ENCODE measurements at regions of chr17 and their contacts with region 1.

Region 1: GRCh38 chr17:58417300-58418092 is at the start of gene RNF43:
- DNase-seq: peak; percentile 93
- H3K4me3 Mint-ChIP-seq: no peak within 1 kb of the TSS
- H3K27ac Mint-ChIP-seq: no peak within 1 kb of the TSS
- H3K4me1 Mint-ChIP-seq: peaks cover 19% of the 10 kb centered on the region
- H3K27me3 Mint-ChIP-seq: peaks cover 7% of the 10 kb centered on the region

Region 2: GRCh38 chr17:58249270-58250133 is 168.0 kb before region 1 on chr17:
- CTCF ChIA-PET with region 1: interaction called, 16 read pairs
- DNase-seq: peak; percentile 79
- H3K4me3 Mint-ChIP-seq: peak overlapping the region; percentile 64
- H3K27ac Mint-ChIP-seq: no peak overlapping the region
- H3K4me1 Mint-ChIP-seq: peaks cover 26% of the 10 kb centered on the region
- H3K27me3 Mint-ChIP-seq: peaks cover 84% of the 10 kb centered on the region

Region 3: GRCh38 chr17:58303971-58304725 is 113.3 kb before region 1 on chr17:
- CTCF ChIA-PET with region 1: interaction called, 18 read pairs
- DNase-seq: peak; percentile 72
- H3K4me3 Mint-ChIP-seq: no peak overlapping the region
- H3K27ac Mint-ChIP-seq: no peak overlapping the region
- H3K4me1 Mint-ChIP-seq: no peaks in the 10 kb centered on the region
- H3K27me3 Mint-ChIP-seq: no peaks in the 10 kb centered on the region

Region 4: GRCh38 chr17:58344047-58344790 is 73.3 kb before region 1 on chr17:
- CTCF ChIA-PET with region 1: interaction called, 21 read pairs
- DNase-seq: peak; percentile 90
- H3K4me3 Mint-ChIP-seq: peak overlapping the region; percentile 99
- H3K27ac Mint-ChIP-seq: peak overlapping the region; percentile 99
- H3K4me1 Mint-ChIP-seq: peaks cover 85% of the 10 kb centered on the region
- H3K27me3 Mint-ChIP-seq: no peaks in the 10 kb centered on the region

Region 5: DNA sequence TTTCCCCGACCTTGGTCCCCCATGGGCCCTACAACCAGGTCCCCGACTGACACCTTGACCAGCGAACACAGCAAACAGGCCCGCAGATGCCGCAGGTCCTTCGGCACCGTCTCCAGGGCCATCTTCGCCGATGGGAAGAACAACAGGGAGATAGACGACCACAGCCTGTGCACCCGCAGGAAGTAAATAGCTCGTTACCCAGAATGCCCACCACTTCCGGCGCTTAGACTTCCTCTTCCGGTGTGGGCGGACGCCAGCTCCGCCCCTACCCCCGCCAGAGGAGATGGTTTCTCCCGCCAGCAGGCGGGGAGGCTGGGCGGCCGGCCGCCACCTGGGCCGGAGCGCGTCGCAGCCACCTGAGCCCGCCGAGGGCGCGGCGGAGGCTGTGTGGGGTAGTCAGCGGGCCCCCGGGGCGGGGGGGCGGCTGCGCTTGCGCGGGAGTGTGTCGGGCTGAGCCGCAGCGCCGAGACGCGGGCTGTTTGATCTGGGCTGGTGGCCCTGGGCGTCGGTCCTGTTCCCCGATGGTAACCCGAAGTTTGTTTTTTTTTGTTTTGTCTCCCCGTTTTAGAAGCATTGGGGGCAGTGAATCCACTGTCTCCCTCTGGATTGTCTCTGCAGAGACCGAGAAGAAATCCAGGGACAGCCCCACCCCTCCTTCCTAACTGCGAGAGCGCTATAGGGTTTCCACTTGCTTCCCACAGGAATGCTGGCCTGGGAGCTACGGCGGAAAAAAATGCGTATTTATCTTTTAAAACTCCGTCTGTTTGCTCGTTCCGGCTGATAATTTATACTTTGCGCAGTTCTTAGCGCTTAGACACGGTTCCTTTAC is 65.3 kb before region 1 on chr17 and contains the start of gene SUPT4H1:
- CTCF ChIA-PET with region 1: interaction called, 20 read pairs
- DNase-seq: peak; percentile 91
- H3K4me3 Mint-ChIP-seq: peak within 1 kb of the TSS; percentile 100
- H3K27ac Mint-ChIP-seq: peak within 1 kb of the TSS; percentile 98
- H3K4me1 Mint-ChIP-seq: peaks cover 61% of the 10 kb centered on the region
- H3K27me3 Mint-ChIP-seq: no peaks in the 10 kb centered on the region

Measured in activated naive CD4-positive, alpha-beta T cell treated with anti-CD3 and anti-CD28 coated beads, Interleukin-2, amount 10 ng/mL, durations not matched to agents 7 days and 5 days (primary cell).